PC-9 (cell line): ENCODE measurements at regions of chr19 and their contacts with region 1.

Region 1: GRCh38 chr19:54023191-54023590 is 31.8 kb downstream of the CACNG6 start:
- DNase-seq: no peak
- H3K4me3 ChIP-seq: no peak overlapping the region
- H3K27ac ChIP-seq: no peak overlapping the region
- H3K4me1 ChIP-seq: peaks cover 51% of the 10 kb centered on the region
- H3K27me3 ChIP-seq: no peaks in the 10 kb centered on the region
- CTCF ChIP-seq: no peak

Region 2: GRCh38 chr19:53808710-53809125 is 214.5 kb before region 1 on chr19:
- CTCF ChIA-PET with region 1: interaction called, 28 read pairs
- POLR2A ChIA-PET with region 1: no interaction called
- intact Hi-C with region 1: loop called (anchors 1 kb)
- DNase-seq: peak; percentile 29 to 44
- H3K4me3 ChIP-seq: no peak overlapping the region
- H3K27ac ChIP-seq: no peak overlapping the region
- H3K4me1 ChIP-seq: no peaks in the 10 kb centered on the region
- H3K27me3 ChIP-seq: no peaks in the 10 kb centered on the region
- CTCF ChIP-seq: peak; percentile 76

Region 3: GRCh38 chr19:53879140-53880081 is 143.8 kb before region 1 on chr19:
- CTCF ChIA-PET with region 1: interaction called, 4 read pairs
- POLR2A ChIA-PET with region 1: no interaction called
- intact Hi-C with region 1: loop called (anchors 5 kb)
- DNase-seq: peak; percentile 70 to 96
- H3K4me3 ChIP-seq: peak overlapping the region; percentile 59
- H3K27ac ChIP-seq: no peak overlapping the region
- H3K4me1 ChIP-seq: peaks cover 22% of the 10 kb centered on the region
- H3K27me3 ChIP-seq: no peaks in the 10 kb centered on the region
- CTCF ChIP-seq: no peak

Region 4: DNA sequence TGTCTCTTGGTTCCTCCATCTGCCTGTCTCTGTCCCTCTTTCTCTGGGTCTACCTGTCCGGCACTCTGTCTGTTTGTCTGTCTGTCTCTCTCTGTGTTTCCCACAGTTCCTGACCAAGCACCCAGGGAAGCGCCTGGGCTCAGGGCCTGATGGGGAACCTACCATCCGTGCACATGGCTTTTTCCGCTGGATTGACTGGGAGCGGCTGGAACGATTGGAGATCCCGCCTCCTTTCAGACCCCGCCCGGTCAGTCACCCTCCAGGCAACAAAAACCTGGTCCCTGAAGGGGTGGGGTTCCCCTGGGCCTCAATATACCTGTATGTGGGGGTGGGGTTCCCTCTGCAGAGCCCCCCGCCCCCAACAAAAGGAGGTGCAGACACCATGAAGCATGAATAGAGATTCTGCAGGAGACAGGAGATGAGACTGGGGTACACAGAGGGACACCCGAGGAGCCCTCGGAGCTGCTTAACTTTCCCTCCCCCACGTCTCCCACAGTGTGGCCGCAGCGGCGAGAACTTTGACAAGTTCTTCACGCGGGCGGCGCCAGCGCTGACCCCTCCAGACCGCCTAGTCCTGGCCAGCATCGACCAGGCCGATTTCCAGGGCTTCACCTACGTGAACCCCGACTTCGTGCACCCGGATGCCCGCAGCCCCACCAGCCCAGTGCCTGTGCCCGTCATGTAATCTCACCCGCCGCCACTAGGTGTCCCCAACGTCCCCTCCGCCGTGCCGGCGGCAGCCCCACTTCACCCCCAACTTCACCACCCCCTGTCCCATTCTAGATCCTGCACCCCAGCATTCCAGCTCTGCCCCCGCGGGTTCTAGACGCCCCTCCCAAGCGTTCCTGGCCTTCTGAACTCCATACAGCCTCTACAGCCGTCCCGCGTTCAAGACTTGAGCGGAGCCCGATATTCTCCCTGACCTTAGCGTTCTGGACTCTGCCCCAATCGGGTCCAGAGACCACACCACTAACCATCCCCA is 116.7 kb before region 1 on chr19:
- CTCF ChIA-PET with region 1: interaction called, 3 read pairs
- POLR2A ChIA-PET with region 1: no interaction called
- intact Hi-C with region 1: loop called (anchors 5 kb)
- DNase-seq: peak in 1 of 2 experiments; percentile 63
- H3K4me3 ChIP-seq: no peak overlapping the region
- H3K27ac ChIP-seq: no peak overlapping the region
- H3K4me1 ChIP-seq: peaks cover 23% of the 10 kb centered on the region
- H3K27me3 ChIP-seq: peaks cover 18% of the 10 kb centered on the region
- CTCF ChIP-seq: peak; percentile 99

Region 5: DNA sequence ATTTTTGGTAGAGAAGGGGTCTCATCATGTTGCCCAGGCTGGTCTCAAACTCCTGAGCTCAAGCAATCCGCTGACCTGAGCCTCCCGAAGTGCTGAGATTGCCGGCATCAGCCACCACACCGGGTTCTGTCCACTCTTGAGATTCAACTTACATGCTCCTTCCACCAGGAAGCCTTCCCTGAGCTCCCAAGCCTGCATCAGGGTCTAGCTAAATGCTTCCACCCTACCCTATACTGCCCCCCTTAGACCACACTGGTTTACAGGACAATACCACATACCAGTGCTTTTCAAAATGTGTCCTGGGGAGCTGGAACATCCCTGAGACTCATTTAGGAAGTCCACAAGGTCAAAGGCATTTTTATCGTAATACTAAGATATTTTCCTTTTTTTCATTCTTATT is 75.6 kb before region 1 on chr19:
- CTCF ChIA-PET with region 1: interaction called, 3 read pairs
- POLR2A ChIA-PET with region 1: interaction called, 10 read pairs
- intact Hi-C with region 1: no loop called
- DNase-seq: no peak
- H3K4me3 ChIP-seq: no peak overlapping the region
- H3K27ac ChIP-seq: no peak overlapping the region
- H3K4me1 ChIP-seq: no peaks in the 10 kb centered on the region
- H3K27me3 ChIP-seq: no peaks in the 10 kb centered on the region
- CTCF ChIP-seq: peak; percentile 47; the same call in 1 of the 2 replicates

Region 6: GRCh38 chr19:53977429-53977990 is 45.7 kb before region 1 on chr19:
- CTCF ChIA-PET with region 1: interaction called, 8 read pairs
- POLR2A ChIA-PET with region 1: no interaction called
- intact Hi-C with region 1: loop called (anchors 2 kb)
- DNase-seq: peak; percentile 72 to 79
- H3K4me3 ChIP-seq: no peak overlapping the region
- H3K27ac ChIP-seq: no peak overlapping the region
- H3K4me1 ChIP-seq: peaks cover 6% of the 10 kb centered on the region; the same call in 1 of the 2 replicates
- H3K27me3 ChIP-seq: no peaks in the 10 kb centered on the region
- CTCF ChIP-seq: no peak

Region 7: DNA sequence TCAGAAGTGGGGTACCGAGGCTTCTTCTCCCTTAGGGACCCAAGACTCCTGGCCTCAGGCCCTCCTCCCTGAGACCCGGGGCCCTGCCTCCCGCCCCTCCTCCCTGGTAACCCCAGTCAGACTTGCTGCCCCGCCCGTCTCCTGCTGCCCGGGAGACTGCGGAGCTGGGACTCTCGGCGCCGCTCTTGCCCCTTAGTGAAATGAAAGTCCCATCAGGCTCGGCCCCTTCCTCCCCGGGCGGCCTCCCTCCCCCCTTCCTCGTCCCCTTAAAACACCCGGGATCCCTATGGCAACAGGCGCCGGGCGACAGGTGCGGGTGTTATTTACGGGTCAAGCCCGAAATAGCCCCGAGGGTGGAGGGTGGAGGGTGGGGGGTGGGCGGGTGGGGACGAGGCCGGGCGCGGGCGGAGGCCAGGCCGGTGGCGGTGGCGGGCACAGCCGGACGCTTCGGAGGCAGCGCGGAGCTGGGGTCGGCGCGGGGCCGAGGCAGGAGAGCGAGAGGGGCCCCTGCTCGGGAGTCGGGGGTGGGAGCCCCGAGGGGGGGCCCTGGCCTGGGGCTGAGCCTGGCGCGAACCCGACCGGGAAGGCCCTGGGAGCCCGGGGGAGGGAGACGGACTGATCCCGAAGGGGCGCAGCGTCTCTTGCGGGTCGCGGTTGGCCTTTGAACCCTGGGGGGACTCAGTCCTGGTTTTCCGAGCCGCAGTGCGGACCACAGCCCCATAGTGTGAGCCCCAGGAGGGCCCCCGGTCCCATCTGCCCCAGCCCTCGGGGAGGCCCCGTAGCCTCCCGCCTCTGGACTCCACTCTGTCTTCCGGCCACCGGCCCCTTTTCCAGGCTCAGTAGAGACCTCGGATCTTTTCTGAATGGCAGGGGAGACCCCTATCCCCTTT is 31.7 kb before region 1 on chr19 and contains the start of gene CACNG6:
- CTCF ChIA-PET with region 1: no interaction called
- POLR2A ChIA-PET with region 1: no interaction called
- intact Hi-C with region 1: no loop called
- DNase-seq: peak; percentile 72
- H3K4me3 ChIP-seq: peak within 1 kb of the TSS; percentile 94
- H3K27ac ChIP-seq: peak within 1 kb of the TSS; percentile 69
- H3K4me1 ChIP-seq: peaks cover 37% of the 10 kb centered on the region
- H3K27me3 ChIP-seq: no peaks in the 10 kb centered on the region
- CTCF ChIP-seq: no peak
- total RNA-seq, gene CACNG6: 11.5 and 18.7 TPM in 2 replicates